SK-N-SH (cell line): ENCODE measurements at regions of chr3 and their contacts with region 1.

Region 1: DNA sequence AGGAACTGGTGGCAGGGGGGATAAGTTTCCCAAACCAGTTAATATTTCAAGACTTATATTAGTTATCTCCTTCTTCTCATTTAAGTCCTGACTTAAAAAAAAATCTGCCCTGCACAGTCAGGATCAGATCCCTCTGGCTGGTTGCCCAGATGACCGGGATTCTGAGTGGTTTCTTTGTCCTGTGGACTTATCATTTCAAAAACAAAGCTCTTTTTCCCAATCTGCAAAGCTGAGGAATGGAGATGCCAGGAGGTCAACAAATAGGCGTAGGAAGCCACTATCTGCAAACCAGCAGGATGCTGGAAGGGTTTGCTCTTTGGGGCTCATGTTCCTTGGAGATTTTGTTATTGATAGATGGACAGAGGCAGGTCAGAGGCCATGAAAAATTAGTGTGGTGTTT is 5.8 kb downstream of the C3orf20 start:
- DNase-seq: no peak
- H3K4me3 ChIP-seq: no peak overlapping the region
- H3K27ac ChIP-seq: no peak overlapping the region
- H3K4me1 ChIP-seq: peaks cover 0 to 14% of the 10 kb centered on the region in 2 experiments; a peak in 2 of 4 replicates
- H3K27me3 ChIP-seq: no peaks in the 10 kb centered on the region
- CTCF ChIP-seq: no peak
- EP300 ChIP-seq: no peak
- RAD21 ChIP-seq: no peak

Region 2: DNA sequence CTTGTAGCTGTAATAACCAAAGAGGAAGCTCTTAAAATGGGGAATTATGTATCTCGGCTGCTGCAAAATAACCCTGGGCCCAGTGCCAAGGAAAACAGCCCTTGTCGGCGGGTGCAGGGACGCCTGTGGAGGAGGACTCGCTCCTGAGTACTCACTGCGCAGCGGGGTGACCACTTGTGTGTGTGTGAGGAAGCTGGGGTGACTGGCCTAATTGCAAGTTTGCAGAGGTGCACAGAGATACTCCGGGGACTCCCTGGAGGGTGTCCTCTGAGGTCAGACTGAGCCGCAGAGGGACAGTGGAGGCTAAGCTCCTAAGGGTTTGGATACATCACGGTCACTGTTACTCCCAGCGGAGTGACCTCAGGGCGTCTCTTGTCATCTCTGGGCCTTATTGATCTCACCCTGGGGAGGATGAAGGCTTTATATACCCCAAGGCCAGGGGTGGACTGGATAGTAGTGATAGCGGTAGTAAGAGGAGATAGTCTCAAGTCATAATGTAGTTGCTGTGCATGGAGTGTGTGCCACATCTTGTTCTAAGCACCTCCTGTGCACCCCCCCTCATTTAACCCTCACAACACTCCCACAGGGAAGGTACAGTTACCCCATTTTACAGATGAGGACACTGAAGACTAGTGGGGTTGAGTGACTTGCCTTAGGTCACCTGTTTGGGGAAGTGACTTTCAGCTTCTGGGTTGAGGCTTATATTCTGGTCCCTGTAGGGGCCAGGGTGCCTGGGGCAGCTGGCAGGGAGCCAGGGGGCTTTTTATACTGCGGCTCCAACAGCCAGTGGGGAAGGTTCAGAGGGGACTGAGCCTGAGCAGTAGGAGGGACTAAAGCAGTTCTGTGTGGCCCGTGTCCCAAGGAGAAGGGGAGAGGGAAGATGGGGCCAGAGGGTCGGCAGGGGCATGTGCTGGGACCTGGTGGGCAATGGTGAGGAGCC is 240.9 kb before region 1 on chr3:
- CTCF ChIA-PET with region 1: no interaction called
- POLR2A ChIA-PET with region 1: no interaction called
- DNase-seq: peak; percentile 87
- H3K4me3 ChIP-seq: no peak overlapping the region
- H3K27ac ChIP-seq: peak overlapping the region; percentile 1 to 3; a peak in 2 of 4 replicates
- H3K4me1 ChIP-seq: peaks cover 41 to 43% of the 10 kb centered on the region in 2 experiments
- H3K27me3 ChIP-seq: no peaks in the 10 kb centered on the region
- CTCF ChIP-seq: no peak
- EP300 ChIP-seq: peak in 1 of 2 experiments; percentile 54; a peak in 1 of 4 replicates
- RAD21 ChIP-seq: 0 out of 2 replicates have a peak, but pooled peaks have one; percentile 13

Region 3: DNA sequence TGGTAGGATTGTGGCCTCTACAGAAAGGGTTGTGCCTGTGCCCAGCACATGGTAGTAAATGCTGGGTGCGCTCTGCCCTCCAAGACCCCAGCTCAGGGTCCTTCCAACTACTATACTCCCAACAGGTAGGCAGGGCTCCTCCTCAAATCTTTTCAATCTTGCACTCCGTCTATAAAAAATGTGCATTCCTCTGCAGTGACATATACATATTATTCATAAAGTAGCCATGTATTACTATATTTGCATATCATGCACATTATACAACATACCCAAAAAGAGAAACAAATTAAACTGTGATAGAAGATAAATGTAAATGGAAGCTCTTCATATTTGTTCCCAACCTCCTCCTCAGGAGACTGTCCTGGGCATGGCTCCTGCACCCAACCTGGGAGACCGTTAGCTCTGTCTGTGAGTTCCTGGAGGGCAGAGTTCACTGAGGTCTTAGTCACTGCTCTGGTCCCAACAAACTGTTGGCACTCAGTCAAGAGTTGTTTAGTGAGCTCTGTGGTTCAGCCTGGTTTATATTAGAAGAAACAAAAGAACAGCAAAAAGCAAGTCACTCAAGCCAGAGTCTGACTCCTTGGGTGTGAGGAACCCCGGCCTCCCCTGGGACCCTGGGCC is 92.9 kb before region 1 on chr3:
- CTCF ChIA-PET with region 1: no interaction called
- POLR2A ChIA-PET with region 1: no interaction called
- DNase-seq: no peak
- H3K4me3 ChIP-seq: no peak overlapping the region
- H3K27ac ChIP-seq: no peak overlapping the region
- H3K4me1 ChIP-seq: peaks cover 9 to 13% of the 10 kb centered on the region in 2 experiments; a peak in 2 of 4 replicates
- H3K27me3 ChIP-seq: no peaks in the 10 kb centered on the region
- CTCF ChIP-seq: no peak
- EP300 ChIP-seq: no peak; a peak in 1 of 4 replicates
- RAD21 ChIP-seq: no peak

Region 4: GRCh38 chr3:14651440-14652251 is 29.1 kb before region 1 on chr3 and contains the start of gene CCDC174:
- CTCF ChIA-PET with region 1: no interaction called
- POLR2A ChIA-PET with region 1: no interaction called
- DNase-seq: peak; percentile 84
- H3K4me3 ChIP-seq: peak within 1 kb of the TSS; percentile 94 to 99
- H3K27ac ChIP-seq: peak within 1 kb of the TSS; percentile 77 to 78
- H3K4me1 ChIP-seq: peaks cover 14 to 16% of the 10 kb centered on the region in 2 experiments; a peak in 3 of 4 replicates
- H3K27me3 ChIP-seq: no peaks in the 10 kb centered on the region
- CTCF ChIP-seq: no peak
- EP300 ChIP-seq: peak in 1 of 2 experiments; percentile 60; a peak in 1 of 4 replicates
- RAD21 ChIP-seq: no peak
- polyA plus RNA-seq, gene CCDC174: 6.6 and 8.5 TPM in 2 replicates

Region 5: GRCh38 chr3:14706096-14706495 is 25.4 kb after region 1 on chr3:
- CTCF ChIA-PET with region 1: no interaction called
- POLR2A ChIA-PET with region 1: no interaction called
- DNase-seq: no peak
- H3K4me3 ChIP-seq: no peak overlapping the region
- H3K27ac ChIP-seq: no peak overlapping the region
- H3K4me1 ChIP-seq: no peaks in the 10 kb centered on the region
- H3K27me3 ChIP-seq: no peaks in the 10 kb centered on the region
- CTCF ChIP-seq: no peak
- EP300 ChIP-seq: no peak
- RAD21 ChIP-seq: no peak

Region 6: DNA sequence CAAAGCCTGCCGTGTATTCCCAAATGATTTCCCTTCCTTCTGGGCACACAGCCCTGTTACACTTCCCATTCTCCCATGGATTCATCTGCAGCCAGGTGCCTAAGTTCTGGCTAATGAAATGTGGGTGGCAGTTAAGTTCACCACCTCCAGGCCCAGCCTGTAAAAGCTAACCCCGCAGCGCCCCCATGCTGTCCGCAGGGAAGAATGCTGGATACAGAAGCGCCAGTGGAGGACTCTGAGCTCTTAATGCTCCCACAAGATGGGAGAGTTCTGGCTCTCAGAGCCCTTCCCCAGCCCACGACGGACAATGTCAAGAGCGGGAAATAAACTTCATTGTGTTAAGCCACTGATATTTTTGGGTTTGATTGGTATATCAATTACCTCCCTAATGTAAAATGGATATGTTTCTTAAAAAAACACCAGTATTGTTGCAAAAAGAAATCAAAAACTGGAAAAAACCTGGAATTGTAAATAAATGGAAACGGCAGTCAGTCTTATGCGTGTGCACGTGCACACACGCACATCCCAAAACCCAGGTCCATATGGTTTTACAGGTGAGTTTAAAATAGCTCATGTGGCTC is 100.3 kb after region 1 on chr3:
- CTCF ChIA-PET with region 1: interaction called, 26 read pairs
- POLR2A ChIA-PET with region 1: no interaction called
- DNase-seq: no peak
- H3K4me3 ChIP-seq: no peak overlapping the region; a peak in 1 of 4 replicates
- H3K27ac ChIP-seq: no peak overlapping the region
- H3K4me1 ChIP-seq: peaks cover 0 to 15% of the 10 kb centered on the region in 2 experiments; a peak in 1 of 4 replicates
- H3K27me3 ChIP-seq: no peaks in the 10 kb centered on the region
- CTCF ChIP-seq: peak; percentile 34; the same call in 1 of the 2 replicates
- EP300 ChIP-seq: no peak
- RAD21 ChIP-seq: peak; percentile 70